ENCODE measurements at regions of chr12 and their contacts with region 1.

Region 1: GRCh38 chr12:82326905-82327503 is 31.2 kb downstream of the CCDC59 start:
- DNase-seq: no peak
- H3K4me3 ChIP-seq: no peak overlapping the region
- H3K27ac ChIP-seq: no peak overlapping the region
- H3K4me1 ChIP-seq: no peaks in the 10 kb centered on the region
- H3K27me3 ChIP-seq: no peaks in the 10 kb centered on the region
- CTCF ChIP-seq: peak in 2 of 3 experiments; percentile 41 to 55
- POLR2A ChIP-seq: no peak

Region 2: DNA sequence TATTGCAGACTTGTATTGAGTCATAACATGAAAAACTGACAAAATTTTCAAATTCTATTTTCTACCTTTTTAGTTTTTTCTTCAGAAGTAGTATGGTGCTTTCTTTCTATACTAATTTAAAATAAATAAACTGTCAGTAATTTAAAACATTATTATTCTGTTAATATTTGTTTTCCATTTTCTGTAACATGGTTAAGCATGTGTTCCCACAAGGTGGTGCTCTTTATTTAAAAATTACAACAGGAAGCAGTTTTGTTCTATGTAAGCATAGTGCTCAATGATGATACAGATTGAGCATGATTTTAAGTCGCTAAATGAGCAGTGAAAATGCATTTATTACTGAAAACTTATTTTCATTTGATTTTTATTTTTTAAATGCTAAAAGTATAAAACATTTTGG is 682.5 kb before region 1 on chr12:
- intact Hi-C with region 1: loop called (anchors 10 kb)
- DNase-seq: no peak
- H3K4me3 ChIP-seq: no peak overlapping the region
- H3K27ac ChIP-seq: no peak overlapping the region
- H3K4me1 ChIP-seq: no peaks in the 10 kb centered on the region
- H3K27me3 ChIP-seq: no peaks in the 10 kb centered on the region
- CTCF ChIP-seq: peak in 1 of 3 experiments; percentile 43
- POLR2A ChIP-seq: no peak

Region 3: GRCh38 chr12:82400824-82401223 is 73.8 kb after region 1 on chr12:
- intact Hi-C with region 1: no loop called
- DNase-seq: no peak
- H3K4me3 ChIP-seq: no peak overlapping the region
- H3K27ac ChIP-seq: no peak overlapping the region
- H3K4me1 ChIP-seq: no peaks in the 10 kb centered on the region
- H3K27me3 ChIP-seq: no peaks in the 10 kb centered on the region
- CTCF ChIP-seq: no peak
- POLR2A ChIP-seq: no peak

Measured in testis (tissue), 5 donors.